ENCODE measurements at regions of chr17 and their contacts with region 1.

Region 1: DNA sequence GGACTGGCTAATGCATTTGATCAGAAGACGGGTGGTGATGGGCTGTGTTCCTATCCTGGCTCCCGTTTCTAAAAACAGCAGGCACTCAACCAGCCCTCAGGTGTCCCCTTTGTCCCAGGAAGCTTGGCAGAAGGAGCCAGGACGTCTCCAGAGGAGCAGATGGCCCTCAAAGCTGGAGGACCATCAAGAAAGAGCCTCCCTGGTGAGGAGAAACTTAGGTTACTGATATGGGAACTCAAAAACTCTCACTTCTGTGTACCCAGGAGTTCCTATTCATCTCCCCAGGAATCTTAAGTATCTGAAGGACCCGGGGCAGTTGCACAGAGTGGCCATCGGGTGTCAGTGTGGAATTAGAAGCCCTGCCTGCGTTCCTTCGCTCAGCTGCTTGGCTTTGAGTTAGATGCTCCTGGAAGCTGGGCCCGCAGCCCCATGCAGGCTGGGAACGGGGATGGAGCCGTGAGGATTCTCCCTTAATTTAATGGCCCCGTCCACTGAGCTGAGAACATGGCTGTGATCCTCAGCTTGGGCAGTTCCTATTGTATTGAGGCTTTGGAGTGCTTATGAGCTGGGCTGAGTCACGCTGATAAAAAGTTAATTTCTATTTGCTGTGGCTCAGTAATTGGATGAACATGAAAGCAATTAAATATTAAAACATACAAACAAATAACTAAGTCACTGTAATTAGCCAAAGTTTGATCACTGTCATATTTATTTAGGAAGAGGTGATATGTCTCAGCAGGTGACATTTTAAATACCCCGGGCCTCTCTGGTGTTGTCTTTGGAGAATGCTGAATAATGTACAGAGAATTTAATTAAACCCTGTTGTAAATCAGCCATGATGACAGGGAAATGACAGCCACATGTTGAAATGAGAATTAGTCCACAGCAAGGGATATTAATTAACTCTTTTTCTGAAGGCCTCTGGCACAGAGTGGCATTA is 402.1 kb downstream of the SEC14L1 start:
- DNase-seq: peak; percentile 88
- H3K4me3 Mint-ChIP-seq: no peak overlapping the region
- H3K27ac Mint-ChIP-seq: no peak overlapping the region
- H3K4me1 Mint-ChIP-seq: peaks cover 3% of the 10 kb centered on the region
- H3K27me3 Mint-ChIP-seq: peaks cover 24% of the 10 kb centered on the region

Region 2: GRCh38 chr17:77528516-77529327 is 14.1 kb before region 1 on chr17:
- intact Hi-C with region 1: no loop called
- DNase-seq: peak; percentile 72
- H3K4me3 Mint-ChIP-seq: peak overlapping the region; percentile 32
- H3K27ac Mint-ChIP-seq: no peak overlapping the region
- H3K4me1 Mint-ChIP-seq: no peaks in the 10 kb centered on the region
- H3K27me3 Mint-ChIP-seq: peaks cover 23% of the 10 kb centered on the region

Region 3: GRCh38 chr17:77741109-77741508 is 198.3 kb after region 1 on chr17:
- intact Hi-C with region 1: loop called (anchors 10 kb)
- DNase-seq: peak; percentile 74
- H3K4me3 Mint-ChIP-seq: no peak overlapping the region
- H3K27ac Mint-ChIP-seq: no peak overlapping the region
- H3K4me1 Mint-ChIP-seq: no peaks in the 10 kb centered on the region
- H3K27me3 Mint-ChIP-seq: peaks cover 13% of the 10 kb centered on the region

Region 4: GRCh38 chr17:78013683-78014467 is 471.1 kb after region 1 on chr17:
- intact Hi-C with region 1: loop called (anchors 1 kb)
- DNase-seq: peak; percentile 85
- H3K4me3 Mint-ChIP-seq: no peak overlapping the region
- H3K27ac Mint-ChIP-seq: no peak overlapping the region
- H3K4me1 Mint-ChIP-seq: peaks cover 8% of the 10 kb centered on the region
- H3K27me3 Mint-ChIP-seq: no peaks in the 10 kb centered on the region